T-cell (primary cell): ENCODE measurements at regions of chr18 and their contacts with region 1.

Region 1: GRCh38 chr18:31343454-31343853 is 25.5 kb downstream of the DSG1 start:
- DNase-seq: no peak
- ATAC-seq: no peak
- H3K4me3 ChIP-seq: no peak overlapping the region
- H3K4me3 Mint-ChIP-seq: no peak overlapping the region
- H3K27ac ChIP-seq: no peak overlapping the region
- H3K27ac Mint-ChIP-seq: no peak overlapping the region
- H3K4me1 ChIP-seq: no peaks in the 10 kb centered on the region
- H3K4me1 Mint-ChIP-seq: no peaks in the 10 kb centered on the region
- H3K27me3 ChIP-seq: no peaks in the 10 kb centered on the region
- H3K27me3 Mint-ChIP-seq: no peaks in the 10 kb centered on the region

Region 2: GRCh38 chr18:31325051-31325450 is 18.4 kb before region 1 on chr18:
- CTCF ChIA-PET with region 1: interaction called in 1 of 2 experiments, 12 read pairs
- POLR2A ChIA-PET with region 1: no interaction called
- DNase-seq: no peak
- ATAC-seq: no peak
- H3K4me3 ChIP-seq: no peak overlapping the region
- H3K4me3 Mint-ChIP-seq: no peak overlapping the region
- H3K27ac ChIP-seq: no peak overlapping the region
- H3K27ac Mint-ChIP-seq: no peak overlapping the region
- H3K4me1 ChIP-seq: no peaks in the 10 kb centered on the region
- H3K4me1 Mint-ChIP-seq: no peaks in the 10 kb centered on the region
- H3K27me3 ChIP-seq: no peaks in the 10 kb centered on the region
- H3K27me3 Mint-ChIP-seq: no peaks in the 10 kb centered on the region

Region 3: DNA sequence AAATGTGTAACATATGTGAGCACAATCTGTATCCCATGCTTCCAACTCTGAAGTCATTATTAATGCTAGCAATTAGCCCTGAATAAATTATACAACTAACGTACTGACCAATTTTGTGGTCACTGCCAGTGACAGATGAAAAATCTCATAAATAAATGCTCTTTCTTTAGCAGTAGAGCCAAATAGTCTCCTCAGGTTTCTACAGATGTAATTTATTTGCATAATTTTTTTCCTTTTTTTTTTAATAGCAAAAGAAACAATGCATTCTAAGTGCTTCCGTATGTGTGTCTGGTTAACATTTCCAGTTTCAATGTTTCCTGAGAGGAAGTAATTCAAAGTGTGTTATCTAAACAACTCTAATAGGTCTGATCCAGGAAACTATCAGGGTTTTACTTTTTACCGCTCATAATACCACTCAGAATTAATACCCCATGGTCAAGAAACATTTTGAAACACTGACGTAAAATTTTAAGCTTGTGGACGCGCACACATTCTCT is 954.8 kb after region 1 on chr18:
- CTCF ChIA-PET with region 1: no interaction called
- POLR2A ChIA-PET with region 1: no interaction called
- DNase-seq: no peak
- ATAC-seq: no peak
- H3K4me3 ChIP-seq: no peak overlapping the region
- H3K4me3 Mint-ChIP-seq: no peak overlapping the region
- H3K27ac ChIP-seq: no peak overlapping the region
- H3K27ac Mint-ChIP-seq: no peak overlapping the region
- H3K4me1 ChIP-seq: no peaks in the 10 kb centered on the region
- H3K4me1 Mint-ChIP-seq: no peaks in the 10 kb centered on the region
- H3K27me3 ChIP-seq: no peaks in the 10 kb centered on the region
- H3K27me3 Mint-ChIP-seq: peaks cover 0 to 17% of the 10 kb centered on the region in 2 donors